ENCODE measurements at regions of chr20 and their contacts with region 1.

Region 1: DNA sequence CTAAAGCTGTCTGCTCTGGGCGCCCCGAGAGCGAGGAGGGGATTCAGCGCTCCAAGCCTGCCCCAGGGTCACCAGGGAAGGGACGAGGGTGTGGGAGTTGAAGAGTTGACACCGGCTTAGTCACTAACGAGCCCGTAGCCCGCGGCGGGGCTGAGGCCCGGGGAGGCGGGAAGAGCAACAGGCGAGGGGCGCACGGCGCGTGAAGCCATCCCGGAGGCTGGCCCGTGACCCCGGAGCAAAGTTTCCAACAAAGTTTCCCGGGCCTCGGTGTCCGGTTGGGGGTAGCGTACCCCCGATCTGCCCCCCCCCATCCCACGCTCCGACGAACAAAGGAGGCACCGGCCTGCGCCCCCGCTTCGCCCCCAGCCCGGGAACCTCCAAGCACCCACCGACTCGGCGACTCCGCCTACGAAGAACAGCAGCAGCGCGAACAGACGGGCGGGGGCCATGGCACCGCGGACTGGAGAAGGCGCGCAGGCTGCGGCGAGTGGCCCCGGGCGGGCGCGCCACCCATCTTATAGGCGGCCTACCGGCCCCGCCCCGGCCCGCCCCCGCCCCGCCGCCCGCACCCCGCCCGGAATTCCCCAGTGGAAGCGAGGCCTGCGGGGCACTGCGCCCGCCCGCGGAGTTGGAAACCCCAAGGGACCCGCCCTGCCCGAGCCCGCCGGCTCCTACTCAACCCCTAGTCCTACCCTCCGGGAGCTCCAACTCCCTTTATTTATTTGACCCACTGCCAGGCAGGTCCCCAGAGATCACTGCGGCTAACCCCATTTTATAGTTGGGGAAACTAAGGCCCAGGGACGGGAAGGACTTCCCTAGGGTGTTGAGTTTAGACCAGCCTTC is at the start of gene SDC4:
- DNase-seq: no peak
- ATAC-seq: peak; percentile 55
- H3K4me3 ChIP-seq: peak within 1 kb of the TSS; percentile 79 to 87 (median 87)
- H3K27ac ChIP-seq: peak within 1 kb of the TSS; percentile 53
- H3K4me1 ChIP-seq: peaks cover 69% of the 10 kb centered on the region
- H3K27me3 ChIP-seq: peaks cover 1 to 11% of the 10 kb centered on the region in 2 experiments; a peak in 2 of 5 replicates
- CTCF ChIP-seq: no peak
- EP300 ChIP-seq: no peak
- POLR2A ChIP-seq: peak; percentile 96 to 99
- RAD21 ChIP-seq: peak; percentile 44; the same call in 1 of the 2 replicates
- total RNA-seq, gene SDC4: 36.0 and 65.1 TPM in 2 replicates

Region 2: GRCh38 chr20:45268531-45268930 is 79.6 kb before region 1 on chr20:
- CTCF ChIA-PET with region 1: no interaction called
- POLR2A ChIA-PET with region 1: no interaction called
- in situ Hi-C with region 1: no loop called
- intact Hi-C with region 1: no loop called
- DNase-seq: no peak
- ATAC-seq: no peak
- H3K4me3 ChIP-seq: no peak overlapping the region
- H3K27ac ChIP-seq: no peak overlapping the region
- H3K4me1 ChIP-seq: no peaks in the 10 kb centered on the region
- H3K27me3 ChIP-seq: peaks cover 0 to 28% of the 10 kb centered on the region in 2 experiments; a peak in 3 of 5 replicates
- CTCF ChIP-seq: no peak
- EP300 ChIP-seq: no peak
- POLR2A ChIP-seq: no peak
- RAD21 ChIP-seq: no peak

Region 3: GRCh38 chr20:45337367-45338120 is 10.6 kb before region 1 on chr20:
- CTCF ChIA-PET with region 1: no interaction called
- POLR2A ChIA-PET with region 1: interaction called, 1,422 read pairs
- in situ Hi-C with region 1: no loop called
- intact Hi-C with region 1: no loop called
- DNase-seq: peak; percentile 65
- ATAC-seq: peak; percentile 32
- H3K4me3 ChIP-seq: peak overlapping the region; percentile 31 to 57 (median 32)
- H3K27ac ChIP-seq: peak overlapping the region; percentile 80
- H3K4me1 ChIP-seq: peaks cover 67% of the 10 kb centered on the region
- H3K27me3 ChIP-seq: no peaks in the 10 kb centered on the region
- CTCF ChIP-seq: no peak
- EP300 ChIP-seq: no peak
- POLR2A ChIP-seq: peak in 1 of 2 experiments; percentile 39; a peak in 1 of 4 replicates
- RAD21 ChIP-seq: no peak

Region 4: GRCh38 chr20:46914789-46915379 is 1566.7 kb after region 1 on chr20:
- CTCF ChIA-PET with region 1: no interaction called
- POLR2A ChIA-PET with region 1: no interaction called
- in situ Hi-C with region 1: no loop called
- intact Hi-C with region 1: no loop called
- DNase-seq: no peak
- ATAC-seq: no peak
- H3K4me3 ChIP-seq: no peak overlapping the region
- H3K27ac ChIP-seq: no peak overlapping the region
- H3K4me1 ChIP-seq: no peaks in the 10 kb centered on the region
- H3K27me3 ChIP-seq: peaks cover 0 to 28% of the 10 kb centered on the region in 2 experiments; a peak in 4 of 5 replicates
- CTCF ChIP-seq: no peak
- EP300 ChIP-seq: no peak
- POLR2A ChIP-seq: no peak
- RAD21 ChIP-seq: no peak